Esophagus muscularis mucosa (tissue), 4 donors: ENCODE measurements at regions of chr9 and their contacts with region 1.

Region 1: DNA sequence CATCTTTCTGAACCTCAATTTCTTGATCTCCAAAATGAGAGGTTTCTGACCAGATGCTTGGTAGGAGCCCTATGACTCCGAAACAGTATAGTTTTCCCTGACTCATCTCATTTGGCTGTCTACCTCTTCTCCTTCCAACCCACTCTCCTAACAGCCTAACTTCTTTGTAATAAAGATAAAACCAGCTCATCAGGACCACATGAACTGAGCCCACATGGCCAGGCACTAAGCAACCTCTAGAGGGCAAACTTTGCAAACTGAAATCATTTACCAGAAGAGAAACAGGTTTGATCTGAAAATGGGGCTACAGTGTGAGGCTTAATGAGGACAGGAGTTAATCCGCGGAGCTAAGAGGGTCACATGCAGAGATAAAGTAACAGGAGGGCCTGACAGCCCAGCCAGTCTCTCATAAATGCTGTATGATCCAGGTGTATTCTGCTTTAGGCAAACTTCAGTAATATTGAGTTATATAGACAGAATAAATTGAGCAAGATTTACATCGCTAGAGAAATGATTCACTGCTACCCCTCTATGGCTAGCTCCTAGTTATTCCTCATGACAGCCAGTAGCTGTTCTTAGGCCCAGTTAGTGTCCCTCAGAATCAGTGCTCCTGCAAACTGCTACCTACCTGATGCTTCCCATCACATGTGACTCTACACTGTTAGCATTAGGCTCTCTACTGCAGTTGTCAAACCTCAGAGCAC is 64.6 kb downstream of the ABCA1 start:
- DNase-seq: no peak
- H3K4me3 ChIP-seq: no peak overlapping the region
- H3K27ac ChIP-seq: peak overlapping the region; percentile 7 to 56 (median 26)
- H3K4me1 ChIP-seq: peaks cover 20 to 66% (median 59%) of the 10 kb centered on the region in 4 donors
- H3K27me3 ChIP-seq: no peaks in the 10 kb centered on the region
- CTCF ChIP-seq: peak; percentile 55 to 82 (median 63)
- EP300 ChIP-seq: no peak
- POLR2A ChIP-seq: no peak

Region 2: GRCh38 chr9:104907278-104907951 is 44.1 kb after region 1 on chr9:
- intact Hi-C with region 1: no loop called
- DNase-seq: no peak
- H3K4me3 ChIP-seq: peak overlapping the region in 1 of 4 donors; percentile 4
- H3K27ac ChIP-seq: peak overlapping the region; percentile 74 to 89 (median 82)
- H3K4me1 ChIP-seq: peaks cover 86 to 100% (median 99%) of the 10 kb centered on the region in 4 donors
- H3K27me3 ChIP-seq: no peaks in the 10 kb centered on the region
- CTCF ChIP-seq: no peak
- EP300 ChIP-seq: peak; percentile 55
- POLR2A ChIP-seq: no peak

Region 3: GRCh38 chr9:105414947-105415661 is 551.8 kb after region 1 on chr9:
- intact Hi-C with region 1: loop called (anchors 5 kb)
- DNase-seq: no peak
- H3K4me3 ChIP-seq: no peak overlapping the region
- H3K27ac ChIP-seq: no peak overlapping the region
- H3K4me1 ChIP-seq: peaks cover 3 to 9% (median 6%) of the 10 kb centered on the region in 4 donors
- H3K27me3 ChIP-seq: no peaks in the 10 kb centered on the region
- CTCF ChIP-seq: peak; percentile 77 to 84 (median 79)
- EP300 ChIP-seq: no peak
- POLR2A ChIP-seq: no peak